ENCODE measurements at regions of chrX and their contacts with region 1.

Region 1: DNA sequence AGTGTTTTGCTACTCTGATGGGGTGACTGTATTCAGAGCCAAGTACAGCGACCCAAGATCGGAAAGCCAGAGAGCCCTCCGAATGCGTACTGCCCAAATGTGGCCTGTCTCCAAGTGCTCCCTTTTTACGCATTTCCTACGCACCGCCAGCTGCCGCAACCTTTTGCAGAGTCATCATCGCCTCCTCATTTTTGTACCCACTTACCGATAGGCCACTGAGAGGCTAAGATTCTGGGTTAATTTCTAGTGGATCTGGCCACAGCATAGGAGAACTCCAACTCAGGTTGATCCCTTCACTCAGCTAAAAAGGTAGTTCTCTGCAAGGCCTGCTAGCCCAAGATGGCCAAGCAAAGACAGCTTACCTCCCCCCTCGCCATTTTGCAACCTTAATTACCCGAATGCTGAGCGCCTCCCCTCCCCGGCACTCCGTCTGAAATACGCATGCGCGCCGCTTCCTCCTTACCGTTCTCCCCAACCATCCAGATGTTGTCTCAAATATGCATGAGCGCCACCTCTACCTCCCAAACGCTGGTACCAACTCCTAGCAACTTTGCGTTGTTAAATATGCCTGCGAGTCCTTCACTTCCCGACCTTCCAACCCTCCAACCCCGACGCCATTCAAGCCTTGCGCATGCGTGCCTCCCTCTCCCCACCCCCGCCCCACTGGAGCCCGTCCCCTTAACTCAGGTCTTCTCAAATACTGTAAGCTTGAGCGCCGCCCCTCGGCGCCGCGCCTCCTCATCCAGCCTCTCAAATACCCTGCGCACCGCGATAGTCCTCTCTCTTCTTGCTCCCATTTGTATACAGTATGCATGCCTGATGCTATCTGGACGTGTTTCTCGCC is 11.8 kb upstream of the ZCCHC13 start:
- DNase-seq: peak; percentile 88
- H3K4me3 Mint-ChIP-seq: peak overlapping the region; percentile 96
- H3K27ac Mint-ChIP-seq: peak overlapping the region; percentile 99
- H3K4me1 Mint-ChIP-seq: peaks cover 21% of the 10 kb centered on the region
- H3K27me3 Mint-ChIP-seq: no peaks in the 10 kb centered on the region

Region 2: DNA sequence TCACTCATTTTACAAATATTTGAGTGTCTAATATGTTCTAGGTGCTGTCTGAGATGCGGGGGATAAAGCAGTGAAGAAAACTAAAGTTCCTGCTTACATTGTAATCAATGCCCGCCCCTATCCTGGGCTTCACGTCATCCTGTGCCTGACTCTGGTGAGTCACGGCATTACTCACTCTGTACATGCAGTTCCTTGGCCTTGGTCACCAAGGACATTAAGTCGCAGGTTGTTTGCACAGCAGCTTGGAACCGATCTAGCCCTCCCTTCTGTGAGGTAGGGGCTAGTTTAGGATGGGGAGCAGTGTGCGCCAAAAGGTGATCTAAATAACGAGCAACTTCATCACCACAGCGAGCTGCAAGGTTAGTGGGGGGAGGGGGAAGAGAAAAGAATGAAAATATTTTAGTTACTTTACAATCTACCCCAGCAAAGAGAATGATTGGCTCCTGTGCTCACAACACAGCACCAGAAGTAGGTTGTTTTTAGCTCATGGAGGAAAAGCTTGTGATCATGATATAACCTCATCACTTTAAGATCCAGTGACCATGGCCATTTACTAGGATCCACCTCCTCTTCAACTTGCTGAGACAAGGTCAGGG is 1671.5 kb before region 1 on chrX:
- CTCF ChIA-PET with region 1: no interaction called
- POLR2A ChIA-PET with region 1: no interaction called
- intact Hi-C with region 1: loop called (anchors 10 kb)
- DNase-seq: peak; percentile 72
- H3K4me3 Mint-ChIP-seq: peak overlapping the region; percentile 54
- H3K27ac Mint-ChIP-seq: peak overlapping the region; percentile 91
- H3K4me1 Mint-ChIP-seq: peaks cover 23% of the 10 kb centered on the region
- H3K27me3 Mint-ChIP-seq: peaks cover 8% of the 10 kb centered on the region

Region 3: GRCh38 chrX:73943693-73944562 is 348.3 kb before region 1 on chrX:
- CTCF ChIA-PET with region 1: no interaction called
- POLR2A ChIA-PET with region 1: no interaction called
- intact Hi-C with region 1: loop called (anchors 5 kb)
- DNase-seq: peak; percentile 89
- H3K4me3 Mint-ChIP-seq: peak overlapping the region; percentile 79
- H3K27ac Mint-ChIP-seq: peak overlapping the region; percentile 85
- H3K4me1 Mint-ChIP-seq: peaks cover 15% of the 10 kb centered on the region
- H3K27me3 Mint-ChIP-seq: no peaks in the 10 kb centered on the region

Region 4: DNA sequence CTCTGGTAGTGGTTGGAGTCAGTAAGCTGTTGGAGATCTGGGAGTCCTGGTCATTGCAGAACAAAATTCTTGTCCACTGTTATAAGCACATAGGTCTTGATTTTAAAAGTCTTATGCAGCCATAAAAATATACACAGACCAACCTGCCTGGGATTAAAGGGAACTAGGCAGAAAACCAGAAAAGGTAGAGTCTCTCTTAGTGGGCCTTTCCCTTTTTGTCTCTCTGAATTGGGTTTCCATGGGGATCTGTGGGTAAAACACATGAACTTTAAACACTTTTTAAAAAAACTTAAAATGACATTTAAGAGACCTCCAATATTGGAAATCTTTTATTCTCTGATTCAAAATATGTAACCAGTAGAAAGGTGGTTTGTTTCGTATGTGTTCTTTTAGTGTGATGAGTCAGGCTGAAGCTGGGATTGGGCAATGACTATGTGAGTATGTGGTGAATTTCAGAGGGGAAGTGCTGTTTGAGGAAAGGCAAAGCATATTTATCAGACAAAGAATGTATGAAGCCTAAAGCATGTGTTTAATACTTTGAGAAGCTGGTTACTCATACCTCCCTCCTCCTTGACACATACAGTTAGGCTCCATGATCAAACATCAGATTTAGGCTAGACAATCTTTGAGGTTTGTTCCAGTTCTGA is 158.7 kb after region 1 on chrX:
- CTCF ChIA-PET with region 1: no interaction called
- POLR2A ChIA-PET with region 1: no interaction called
- intact Hi-C with region 1: loop called (anchors 1 kb)
- DNase-seq: peak; percentile 40
- H3K4me3 Mint-ChIP-seq: no peak overlapping the region
- H3K27ac Mint-ChIP-seq: peak overlapping the region; percentile 80
- H3K4me1 Mint-ChIP-seq: peaks cover 28% of the 10 kb centered on the region
- H3K27me3 Mint-ChIP-seq: no peaks in the 10 kb centered on the region

Region 5: DNA sequence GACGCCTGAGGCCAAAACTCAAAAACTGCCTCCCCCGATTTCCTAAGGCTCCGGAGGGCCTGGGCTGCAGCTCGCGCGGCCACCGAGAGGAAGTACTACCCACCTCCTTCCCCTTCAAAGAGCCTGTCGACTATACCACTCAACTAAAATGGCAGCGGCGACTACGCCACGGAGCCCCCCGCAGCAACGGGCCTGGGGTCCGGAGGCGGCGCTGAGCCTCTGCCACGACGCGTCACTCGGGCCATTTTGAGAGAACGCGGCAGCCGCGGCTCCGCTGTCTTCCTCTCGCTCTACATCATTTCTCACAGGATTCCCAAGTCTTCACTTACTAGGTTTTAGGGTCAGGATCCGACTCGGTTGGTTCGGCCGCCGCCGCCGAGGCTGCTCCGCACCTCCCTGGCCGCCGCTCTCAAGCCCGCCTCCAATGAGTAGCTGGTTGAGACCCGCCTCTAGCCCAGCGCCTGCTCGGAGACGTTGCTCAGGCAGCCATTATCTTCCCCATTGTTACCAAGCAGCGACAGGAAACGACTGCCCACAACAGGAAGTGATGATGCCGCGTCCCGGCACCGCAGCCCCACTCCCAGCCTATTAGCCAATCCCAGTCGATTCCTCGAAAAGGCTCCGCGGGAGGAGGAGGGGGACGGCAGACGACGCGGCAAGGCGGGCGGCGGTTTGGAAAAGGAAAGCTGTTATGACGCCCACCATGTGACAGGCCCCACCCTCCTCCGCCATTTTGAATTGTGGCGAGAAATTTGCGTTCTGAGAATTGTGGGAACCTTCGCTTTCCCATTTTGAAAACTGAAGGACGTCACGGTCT is 322.1 kb after region 1 on chrX and contains the start of gene RLIM:
- CTCF ChIA-PET with region 1: no interaction called
- POLR2A ChIA-PET with region 1: no interaction called
- intact Hi-C with region 1: loop called (anchors 1 kb)
- DNase-seq: peak; percentile 95
- H3K4me3 Mint-ChIP-seq: peak within 1 kb of the TSS; percentile 98
- H3K27ac Mint-ChIP-seq: peak within 1 kb of the TSS; percentile 99
- H3K4me1 Mint-ChIP-seq: peaks cover 12% of the 10 kb centered on the region
- H3K27me3 Mint-ChIP-seq: no peaks in the 10 kb centered on the region
- total RNA-seq, gene RLIM: 36.6 to 37.5 TPM